Gastrocnemius medialis (tissue), 4 donors: ENCODE measurements at regions of chr2 and their contacts with region 1.

Region 1: DNA sequence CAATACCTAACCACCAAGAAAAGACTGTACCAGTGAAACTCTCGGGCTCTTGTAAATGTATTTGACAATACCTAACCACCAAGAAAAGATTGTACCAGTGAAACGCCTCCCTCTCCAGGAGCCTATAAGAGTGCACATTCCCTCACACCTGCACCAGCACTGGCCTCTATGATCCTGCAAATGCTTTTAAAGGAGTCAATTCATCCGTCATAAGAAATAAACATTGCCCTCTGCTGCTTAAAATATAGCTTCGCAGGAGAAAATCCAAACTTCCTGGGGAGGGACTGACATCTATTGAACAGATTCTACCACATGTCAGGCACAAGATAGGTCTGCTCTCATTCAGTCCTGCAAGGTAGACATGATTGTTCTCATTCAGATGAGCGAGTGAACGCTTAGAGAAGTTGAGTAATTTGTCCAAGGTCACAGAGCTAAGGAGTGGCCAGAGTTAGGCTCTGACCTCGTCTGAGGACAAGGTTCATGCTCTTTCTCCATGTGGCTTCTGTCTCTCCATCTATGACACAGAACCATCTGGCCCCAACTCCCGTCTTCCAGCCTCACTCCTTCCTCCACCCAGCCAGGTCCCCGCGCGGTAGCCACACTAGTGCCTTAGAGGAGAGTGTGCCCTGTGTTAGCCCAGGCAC is 38.7 kb downstream of the MCFD2 start:
- DNase-seq: no peak
- ATAC-seq: peak; percentile 64 to 65
- H3K4me3 ChIP-seq: no peak overlapping the region
- H3K27ac ChIP-seq: peak overlapping the region; percentile 11 to 53 (median 34)
- H3K4me1 ChIP-seq: peaks cover 11 to 32% of the 10 kb centered on the region in 2 donors
- H3K27me3 ChIP-seq: no peaks in the 10 kb centered on the region
- CTCF ChIP-seq: peak; percentile 20 to 63 (median 52)
- POLR2A ChIP-seq: no peak

Region 2: GRCh38 chr2:46803911-46804670 is 72.8 kb before region 1 on chr2:
- in situ Hi-C with region 1: no loop called
- intact Hi-C with region 1: loop called (anchors 1 kb)
- DNase-seq: no peak
- ATAC-seq: no peak
- H3K4me3 ChIP-seq: no peak overlapping the region
- H3K27ac ChIP-seq: no peak overlapping the region
- H3K4me1 ChIP-seq: peaks cover 0 to 10% of the 10 kb centered on the region in 2 donors
- H3K27me3 ChIP-seq: no peaks in the 10 kb centered on the region
- CTCF ChIP-seq: no peak
- POLR2A ChIP-seq: no peak

Region 3: DNA sequence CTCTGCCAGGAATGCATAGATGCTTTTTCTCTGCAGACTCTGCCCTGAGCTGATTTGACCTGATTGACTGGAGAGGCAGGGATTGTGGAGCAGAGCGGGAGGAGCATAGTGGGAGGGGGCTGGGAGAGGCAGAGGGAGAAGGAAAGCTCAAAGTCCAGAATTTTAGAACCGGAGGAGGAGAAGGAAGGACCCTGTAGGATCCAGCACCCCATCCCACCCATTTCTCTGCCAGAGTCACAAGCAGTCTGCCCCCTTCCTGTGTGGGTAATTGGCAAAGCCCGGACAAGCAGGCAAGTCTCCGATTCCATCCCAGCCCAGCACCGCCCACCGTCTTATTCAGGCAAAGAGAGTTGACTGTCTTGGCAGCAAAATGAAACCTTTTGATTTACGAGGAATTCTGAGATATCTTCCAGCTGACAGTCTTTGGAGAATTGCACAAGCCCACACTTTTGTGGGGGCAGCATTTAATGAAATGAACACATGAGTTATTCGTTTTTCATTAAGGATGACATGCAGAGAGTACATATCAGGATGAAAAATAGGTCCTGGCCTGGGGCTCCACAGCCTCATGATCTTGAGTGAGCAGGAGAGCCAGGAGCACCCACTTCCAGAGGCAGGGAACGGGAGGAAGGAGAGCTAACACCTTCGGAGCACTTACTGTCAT is 64.4 kb before region 1 on chr2:
- in situ Hi-C with region 1: loop called in 2 of 4 experiments (anchors 10 kb)
- intact Hi-C with region 1: no loop called
- DNase-seq: peak in 1 of 2 donors; percentile 52
- ATAC-seq: peak; percentile 31 to 32
- H3K4me3 ChIP-seq: no peak overlapping the region
- H3K27ac ChIP-seq: peak overlapping the region; percentile 65 to 80 (median 70)
- H3K4me1 ChIP-seq: peaks cover 24 to 41% of the 10 kb centered on the region in 2 donors
- H3K27me3 ChIP-seq: no peaks in the 10 kb centered on the region
- CTCF ChIP-seq: no peak
- POLR2A ChIP-seq: no peak

Region 4: GRCh38 chr2:46818121-46818888 is 58.6 kb before region 1 on chr2:
- in situ Hi-C with region 1: loop called in 2 of 4 experiments (anchors 10 kb)
- intact Hi-C with region 1: loop called (anchors 2 kb)
- DNase-seq: peak; percentile 86 to 94
- ATAC-seq: peak; percentile 94
- H3K4me3 ChIP-seq: no peak overlapping the region
- H3K27ac ChIP-seq: peak overlapping the region; percentile 81 to 89 (median 86)
- H3K4me1 ChIP-seq: peaks cover 37 to 54% of the 10 kb centered on the region in 2 donors
- H3K27me3 ChIP-seq: no peaks in the 10 kb centered on the region
- CTCF ChIP-seq: no peak
- POLR2A ChIP-seq: peak in 1 of 2 donors; percentile 24

Region 5: GRCh38 chr2:46999857-47000678 is 123.2 kb after region 1 on chr2:
- in situ Hi-C with region 1: no loop called
- intact Hi-C with region 1: no loop called
- DNase-seq: no peak
- ATAC-seq: no peak
- H3K4me3 ChIP-seq: no peak overlapping the region
- H3K27ac ChIP-seq: no peak overlapping the region
- H3K4me1 ChIP-seq: peaks cover 7 to 14% of the 10 kb centered on the region in 2 donors
- H3K27me3 ChIP-seq: no peaks in the 10 kb centered on the region
- CTCF ChIP-seq: no peak
- POLR2A ChIP-seq: no peak

Region 6: GRCh38 chr2:47179388-47179787 is 302.5 kb after region 1 on chr2:
- in situ Hi-C with region 1: no loop called
- intact Hi-C with region 1: no loop called
- DNase-seq: no peak
- ATAC-seq: no peak
- H3K4me3 ChIP-seq: no peak overlapping the region
- H3K27ac ChIP-seq: no peak overlapping the region
- H3K4me1 ChIP-seq: peaks cover 3 to 9% of the 10 kb centered on the region in 2 donors
- H3K27me3 ChIP-seq: no peaks in the 10 kb centered on the region
- CTCF ChIP-seq: no peak
- POLR2A ChIP-seq: no peak